CD8-positive, alpha-beta memory T cell (primary cell): ENCODE measurements at regions of chr7 and their contacts with region 1.

Region 1: DNA sequence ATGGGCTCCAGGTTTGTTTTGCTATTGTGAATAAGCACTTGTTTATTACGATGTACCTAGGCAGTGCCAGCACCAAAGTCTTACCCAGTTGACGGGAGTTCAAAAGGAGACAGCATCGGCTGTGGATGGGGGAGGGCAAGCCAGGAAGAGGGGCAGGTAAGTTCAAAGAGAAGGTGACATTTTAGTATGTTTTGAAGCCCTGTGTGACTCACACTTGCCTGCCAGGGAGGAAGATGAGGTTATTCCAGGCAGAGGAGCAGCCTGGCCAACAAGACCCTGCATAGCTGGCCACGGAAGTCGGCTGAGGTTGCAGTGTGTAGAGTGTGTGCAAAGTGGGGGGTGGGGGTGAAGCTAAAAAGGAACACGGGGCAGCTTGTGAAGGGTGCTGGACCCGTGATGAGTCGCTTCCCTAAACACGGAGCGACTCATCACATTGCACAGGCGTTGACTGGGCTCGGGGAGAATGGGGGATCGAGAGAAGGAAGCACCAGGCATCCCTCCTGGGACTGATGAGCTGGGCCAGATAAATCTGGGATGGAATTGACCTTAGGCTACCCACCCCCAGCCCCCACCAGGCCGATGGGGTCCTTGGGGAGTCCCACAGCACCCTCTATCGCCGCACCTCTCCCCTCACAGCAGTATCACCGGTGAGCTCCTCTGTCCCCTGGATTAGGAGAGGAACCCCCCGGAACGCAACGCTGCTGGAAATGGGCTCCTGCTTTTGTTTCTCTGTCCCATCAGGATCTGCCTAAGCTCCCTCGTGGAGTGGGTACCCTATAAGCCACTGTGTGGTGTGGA is 97.9 kb upstream of the IKZF1 start:
- DNase-seq: peak; percentile 36 to 86 (median 61)
- H3K4me3 ChIP-seq: peak overlapping the region; percentile 18
- H3K4me3 Mint-ChIP-seq: peak overlapping the region; percentile 2 to 82 (median 76)
- H3K27ac ChIP-seq: no peak overlapping the region
- H3K27ac Mint-ChIP-seq: peak overlapping the region; percentile 45 to 95 (median 83)
- H3K4me1 ChIP-seq: peaks cover 66% of the 10 kb centered on the region
- H3K4me1 Mint-ChIP-seq: peaks cover 62 to 74% (median 74%) of the 10 kb centered on the region in 3 donors
- H3K27me3 ChIP-seq: no peaks in the 10 kb centered on the region
- H3K27me3 Mint-ChIP-seq: peaks cover 0 to 2% of the 10 kb centered on the region in 2 donors

Region 2: DNA sequence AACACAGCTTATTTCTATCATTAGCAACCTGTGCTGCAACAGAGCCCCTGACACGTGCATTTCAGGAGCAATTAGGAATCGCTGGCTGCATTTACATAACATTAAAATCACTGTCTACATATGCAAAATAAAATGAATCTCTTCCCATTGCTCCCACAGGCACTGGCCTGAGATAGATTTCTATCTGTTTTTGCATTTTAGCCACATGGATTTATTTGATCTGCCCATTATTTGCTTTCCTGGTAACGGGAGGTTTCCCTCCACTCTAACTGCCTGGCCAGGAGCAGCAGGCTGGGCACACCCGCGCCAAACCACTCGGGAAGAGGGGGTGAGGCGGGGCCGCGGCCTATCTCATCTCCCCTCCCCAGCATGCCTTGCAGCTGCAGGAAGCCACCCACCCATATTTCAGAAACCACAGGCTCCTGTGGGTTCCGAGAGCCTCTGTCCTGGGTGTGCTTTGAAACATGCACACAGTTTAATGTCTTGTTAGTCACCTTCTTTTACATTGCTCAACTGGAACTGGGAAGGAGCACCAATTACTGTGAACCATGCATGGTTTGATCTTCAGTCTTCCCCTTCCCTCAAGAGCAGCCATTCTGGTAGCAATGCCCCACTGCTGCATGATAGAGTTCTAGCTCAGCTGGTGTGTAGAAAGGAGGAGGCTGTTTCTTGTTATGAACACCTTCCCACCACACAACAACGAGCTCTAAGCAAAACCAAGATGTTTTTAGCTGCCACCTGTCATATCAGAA is 60.2 kb after region 1 on chr7:
- CTCF ChIA-PET with region 1: interaction called, 50 read pairs
- POLR2A ChIA-PET with region 1: interaction called, 10 read pairs
- DNase-seq: peak; percentile 52 to 90 (median 85)
- H3K4me3 ChIP-seq: peak overlapping the region; percentile 54
- H3K4me3 Mint-ChIP-seq: peak overlapping the region; percentile 75 to 87 (median 80)
- H3K27ac ChIP-seq: peak overlapping the region; percentile 22
- H3K27ac Mint-ChIP-seq: peak overlapping the region; percentile 88 to 98 (median 93)
- H3K4me1 ChIP-seq: peaks cover 98% of the 10 kb centered on the region
- H3K4me1 Mint-ChIP-seq: peaks cover 94 to 100% (median 98%) of the 10 kb centered on the region in 3 donors
- H3K27me3 ChIP-seq: no peaks in the 10 kb centered on the region
- H3K27me3 Mint-ChIP-seq: no peaks in the 10 kb centered on the region

Region 3: DNA sequence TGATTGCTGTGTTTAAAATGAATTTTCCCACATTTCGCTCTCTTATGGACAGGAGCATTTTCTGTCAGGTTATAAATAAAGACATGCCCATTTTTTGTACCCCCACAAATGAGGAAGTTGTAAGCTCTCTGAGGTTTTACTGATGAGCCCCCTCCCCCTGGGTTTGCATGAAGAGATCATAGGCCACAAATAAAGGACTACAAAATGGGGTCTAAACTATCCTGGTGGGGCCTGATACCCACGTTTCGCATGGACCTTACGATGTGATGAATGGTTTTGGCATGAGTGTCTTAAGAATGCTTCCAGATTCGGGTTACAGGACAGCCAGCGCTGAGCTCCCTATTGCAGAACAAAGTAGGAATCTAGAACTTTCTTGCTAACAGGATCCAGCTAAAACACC is 103.7 kb after region 1 on chr7:
- CTCF ChIA-PET with region 1: interaction called, 39 read pairs
- POLR2A ChIA-PET with region 1: interaction called, 29 read pairs
- DNase-seq: no peak
- H3K4me3 ChIP-seq: peak overlapping the region; percentile 92
- H3K4me3 Mint-ChIP-seq: peak overlapping the region; percentile 95 to 100 (median 99)
- H3K27ac ChIP-seq: peak overlapping the region; percentile 86
- H3K27ac Mint-ChIP-seq: peak overlapping the region; percentile 92 to 99 (median 98)
- H3K4me1 ChIP-seq: peaks cover 74% of the 10 kb centered on the region
- H3K4me1 Mint-ChIP-seq: peaks cover 77 to 85% (median 80%) of the 10 kb centered on the region in 3 donors
- H3K27me3 ChIP-seq: no peaks in the 10 kb centered on the region
- H3K27me3 Mint-ChIP-seq: no peaks in the 10 kb centered on the region

Region 4: DNA sequence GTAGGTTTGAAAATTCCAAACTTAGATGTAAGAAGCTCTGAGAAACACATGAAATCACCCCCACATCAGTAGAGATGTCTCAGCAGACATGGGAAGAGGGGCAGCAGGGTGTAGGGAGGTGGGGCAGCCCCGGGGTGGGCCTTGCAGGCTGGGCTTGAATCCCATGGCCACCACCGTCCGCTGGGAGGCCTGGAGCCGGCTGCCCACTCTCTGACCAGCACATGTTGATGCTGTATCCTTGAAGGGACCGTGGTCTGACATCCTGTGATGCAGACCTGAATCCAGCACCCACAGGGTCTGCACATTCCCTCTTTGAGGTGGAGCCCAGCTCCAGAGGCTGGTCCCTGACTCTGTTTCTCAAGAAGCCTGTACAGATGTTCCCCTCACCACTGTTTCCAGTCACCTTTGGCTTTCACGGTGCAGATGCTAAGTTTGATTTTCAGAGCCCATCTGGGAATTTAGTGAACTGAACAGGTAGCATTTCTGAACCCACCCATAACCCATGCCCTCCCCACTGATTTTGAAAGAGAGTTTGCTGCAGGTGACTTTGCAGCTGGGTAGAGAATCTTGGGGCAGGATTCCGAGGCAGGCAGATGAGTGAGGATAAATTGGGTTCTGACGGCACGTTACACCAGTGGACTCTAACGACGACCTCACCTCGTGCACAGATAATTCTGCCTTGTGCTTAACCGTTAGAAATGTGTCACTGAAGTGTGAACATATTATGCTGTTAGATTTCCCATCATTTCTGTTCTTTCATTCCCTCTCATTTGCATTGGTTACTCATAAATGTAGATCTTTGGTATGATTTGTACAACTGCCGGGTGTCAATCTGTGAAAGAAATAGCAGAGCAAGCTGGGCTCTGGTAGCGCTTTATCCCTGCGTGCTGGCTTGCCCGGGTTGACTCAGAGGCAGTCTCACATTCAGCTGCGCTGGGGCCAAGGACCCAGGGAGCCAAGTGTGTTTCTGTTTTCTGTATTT is 143.6 kb after region 1 on chr7:
- CTCF ChIA-PET with region 1: interaction called, 15 read pairs
- POLR2A ChIA-PET with region 1: interaction called, 6 read pairs
- DNase-seq: peak in 4 of 5 donors; percentile 46 to 80 (median 58)
- H3K4me3 ChIP-seq: peak overlapping the region; percentile 44
- H3K4me3 Mint-ChIP-seq: peak overlapping the region; percentile 59 to 90 (median 68)
- H3K27ac ChIP-seq: peak overlapping the region; percentile 73
- H3K27ac Mint-ChIP-seq: peak overlapping the region in 7 of 8 donors; percentile 92 to 100 (median 96)
- H3K4me1 ChIP-seq: peaks cover 97% of the 10 kb centered on the region
- H3K4me1 Mint-ChIP-seq: peaks cover 97 to 100% (median 100%) of the 10 kb centered on the region in 3 donors
- H3K27me3 ChIP-seq: no peaks in the 10 kb centered on the region
- H3K27me3 Mint-ChIP-seq: no peaks in the 10 kb centered on the region

Region 5: DNA sequence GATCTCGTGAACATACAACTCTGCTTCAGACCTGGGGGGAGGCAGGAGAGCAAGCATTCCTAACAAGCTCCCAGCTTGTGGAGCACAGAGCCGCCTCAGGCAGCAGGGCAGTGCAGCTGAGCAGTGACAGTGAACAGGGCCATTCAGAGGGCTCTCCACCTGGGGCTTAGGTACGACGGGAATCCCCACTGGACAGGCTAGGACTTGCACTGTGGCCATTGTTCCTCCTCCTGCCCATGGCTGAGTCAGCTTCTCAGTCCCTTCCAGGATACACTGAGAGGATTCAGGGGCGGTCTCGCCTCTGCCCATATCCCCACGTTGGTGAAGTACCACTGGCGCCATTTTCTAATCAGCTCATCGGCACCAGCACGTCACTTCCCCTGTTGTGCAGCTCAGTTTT is 172.4 kb after region 1 on chr7:
- CTCF ChIA-PET with region 1: interaction called, 30 read pairs
- POLR2A ChIA-PET with region 1: interaction called, 3 read pairs
- DNase-seq: no peak
- H3K4me3 ChIP-seq: no peak overlapping the region
- H3K4me3 Mint-ChIP-seq: peak overlapping the region in 1 of 7 donors; percentile 7
- H3K27ac ChIP-seq: no peak overlapping the region
- H3K27ac Mint-ChIP-seq: peak overlapping the region in 7 of 8 donors; percentile 33 to 87 (median 69)
- H3K4me1 ChIP-seq: peaks cover 73% of the 10 kb centered on the region
- H3K4me1 Mint-ChIP-seq: peaks cover 77 to 100% (median 93%) of the 10 kb centered on the region in 3 donors
- H3K27me3 ChIP-seq: no peaks in the 10 kb centered on the region
- H3K27me3 Mint-ChIP-seq: peaks cover 0 to 3% of the 10 kb centered on the region in 2 donors

Region 6: DNA sequence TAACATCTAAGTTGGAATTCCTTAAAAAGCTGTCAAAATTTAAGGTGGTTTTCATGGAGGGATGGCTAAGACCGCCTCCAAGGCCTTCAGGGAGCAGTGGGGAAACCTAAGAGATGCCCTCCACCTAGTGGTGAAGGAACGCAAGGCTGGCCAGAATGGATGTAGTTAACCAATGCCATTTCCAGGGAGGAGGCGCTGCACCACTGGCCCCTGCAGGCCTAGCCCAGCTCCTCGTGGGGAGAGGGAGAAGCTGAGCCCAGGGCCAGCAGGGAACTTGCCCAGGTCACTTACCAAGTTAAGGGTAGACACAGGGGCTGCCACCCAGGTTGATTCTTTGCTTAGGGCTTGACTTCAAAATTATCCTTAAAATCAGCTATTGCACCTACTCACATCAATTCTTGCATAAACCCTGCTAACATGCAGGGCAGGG is 211.4 kb after region 1 on chr7:
- CTCF ChIA-PET with region 1: interaction called, 62 read pairs
- POLR2A ChIA-PET with region 1: interaction called, 7 read pairs
- DNase-seq: peak; percentile 43 to 81 (median 56)
- H3K4me3 ChIP-seq: no peak overlapping the region
- H3K4me3 Mint-ChIP-seq: no peak overlapping the region
- H3K27ac ChIP-seq: no peak overlapping the region
- H3K27ac Mint-ChIP-seq: no peak overlapping the region
- H3K4me1 ChIP-seq: peaks cover 13% of the 10 kb centered on the region
- H3K4me1 Mint-ChIP-seq: peaks cover 12 to 20% (median 19%) of the 10 kb centered on the region in 3 donors
- H3K27me3 ChIP-seq: no peaks in the 10 kb centered on the region
- H3K27me3 Mint-ChIP-seq: no peaks in the 10 kb centered on the region

Region 7: GRCh38 chr7:50480797-50481196 is 274.1 kb after region 1 on chr7:
- CTCF ChIA-PET with region 1: no interaction called
- POLR2A ChIA-PET with region 1: no interaction called
- DNase-seq: no peak
- H3K4me3 ChIP-seq: no peak overlapping the region
- H3K4me3 Mint-ChIP-seq: no peak overlapping the region
- H3K27ac ChIP-seq: no peak overlapping the region
- H3K27ac Mint-ChIP-seq: no peak overlapping the region
- H3K4me1 ChIP-seq: no peaks in the 10 kb centered on the region
- H3K4me1 Mint-ChIP-seq: no peaks in the 10 kb centered on the region
- H3K27me3 ChIP-seq: no peaks in the 10 kb centered on the region
- H3K27me3 Mint-ChIP-seq: peaks cover 0 to 15% of the 10 kb centered on the region in 2 donors

Region 8: GRCh38 chr7:50739744-50740435 is 533.2 kb after region 1 on chr7:
- CTCF ChIA-PET with region 1: no interaction called
- POLR2A ChIA-PET with region 1: no interaction called
- DNase-seq: peak; percentile 4 to 92 (median 84)
- H3K4me3 ChIP-seq: peak overlapping the region; percentile 42
- H3K4me3 Mint-ChIP-seq: peak overlapping the region; percentile 32 to 75 (median 60)
- H3K27ac ChIP-seq: peak overlapping the region; percentile 38
- H3K27ac Mint-ChIP-seq: peak overlapping the region; percentile 70 to 99 (median 92)
- H3K4me1 ChIP-seq: peaks cover 22% of the 10 kb centered on the region
- H3K4me1 Mint-ChIP-seq: peaks cover 20 to 27% (median 21%) of the 10 kb centered on the region in 3 donors
- H3K27me3 ChIP-seq: no peaks in the 10 kb centered on the region
- H3K27me3 Mint-ChIP-seq: peaks cover 0 to 1% of the 10 kb centered on the region in 2 donors